Activated naive CD8-positive, alpha-beta T cell treated with anti-CD3 and anti-CD28 coated beads, Interleukin-2, amount 10 ng/mL, durations not matched to agents 7 days and 5 days (primary cell): ENCODE measurements at regions of chr7 and their contacts with region 1.

Region 1: DNA sequence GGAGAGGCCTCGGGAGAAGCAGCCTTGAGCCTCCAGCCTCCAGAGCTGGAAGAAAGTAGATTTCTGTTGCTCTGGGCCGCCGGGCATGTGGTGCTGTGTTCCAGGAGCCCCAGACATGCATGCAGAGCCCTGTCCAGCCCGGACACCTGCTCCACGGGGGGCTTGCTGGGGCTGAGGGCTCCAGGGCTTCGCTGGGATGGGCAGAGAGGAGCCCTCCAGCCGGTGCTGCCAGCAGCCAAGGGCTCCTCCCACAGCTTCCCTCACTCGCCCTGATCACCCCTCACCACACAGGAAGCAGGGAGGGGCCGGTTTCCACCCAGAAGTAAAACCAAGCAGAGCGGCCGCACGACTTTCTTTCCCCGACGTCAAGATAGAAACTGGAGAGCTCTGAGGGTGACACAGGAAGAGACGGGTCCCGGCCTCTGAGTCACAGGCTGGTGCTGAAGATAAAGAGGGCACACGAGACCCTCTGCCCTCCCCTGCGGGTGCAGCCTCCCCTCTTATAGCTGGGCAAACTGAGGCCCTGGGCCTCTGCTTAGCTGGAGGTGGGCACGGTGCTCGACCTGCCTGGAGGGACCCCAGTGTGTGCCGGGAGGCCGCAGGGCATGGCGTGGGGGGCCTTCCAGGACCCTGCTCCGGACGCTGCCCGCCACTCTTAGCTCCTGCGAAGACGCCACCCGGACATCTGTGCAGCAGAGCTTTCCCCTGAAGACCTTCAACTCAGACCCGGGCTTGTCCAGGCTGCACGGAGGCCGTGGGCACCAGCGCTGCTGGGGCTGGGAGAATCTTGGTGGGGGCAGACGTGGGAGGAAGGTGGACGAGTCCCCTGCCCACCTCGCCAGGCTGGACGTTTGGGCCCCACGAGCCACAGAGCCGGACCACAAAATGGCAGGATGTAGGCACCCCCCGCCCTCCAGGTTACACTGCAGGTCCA is 31.1 kb downstream of the ADAP1 start:
- DNase-seq: peak; percentile 86
- ATAC-seq: peak; percentile 76
- H3K4me3 Mint-ChIP-seq: peak overlapping the region; percentile 90
- H3K27ac Mint-ChIP-seq: peak overlapping the region; percentile 96
- H3K4me1 Mint-ChIP-seq: peaks cover 8% of the 10 kb centered on the region
- H3K27me3 Mint-ChIP-seq: no peaks in the 10 kb centered on the region

Region 2: DNA sequence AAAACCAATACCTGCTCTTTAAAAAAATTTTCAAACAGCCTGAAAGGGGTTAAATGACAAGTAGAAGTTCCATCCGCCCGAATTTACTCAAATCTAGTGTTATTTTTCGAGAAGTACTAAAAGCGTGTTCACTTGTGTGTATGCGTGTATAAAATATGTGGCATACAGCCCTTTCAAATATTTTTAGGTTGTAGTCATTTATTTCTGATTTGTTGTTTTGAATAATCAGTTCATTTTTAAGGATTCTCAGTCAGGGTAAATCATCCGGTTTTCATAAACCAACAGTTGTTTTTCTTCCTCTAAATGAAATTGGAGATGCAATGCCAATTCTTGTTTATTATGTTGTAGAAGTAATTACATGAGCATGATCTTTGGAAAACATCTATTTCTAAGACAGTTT is 98.0 kb before region 1 on chr7:
- POLR2A ChIA-PET with region 1: no interaction called
- DNase-seq: no peak
- ATAC-seq: no peak
- H3K4me3 Mint-ChIP-seq: no peak overlapping the region
- H3K27ac Mint-ChIP-seq: no peak overlapping the region
- H3K4me1 Mint-ChIP-seq: peaks cover 6% of the 10 kb centered on the region
- H3K27me3 Mint-ChIP-seq: no peaks in the 10 kb centered on the region

Region 3: DNA sequence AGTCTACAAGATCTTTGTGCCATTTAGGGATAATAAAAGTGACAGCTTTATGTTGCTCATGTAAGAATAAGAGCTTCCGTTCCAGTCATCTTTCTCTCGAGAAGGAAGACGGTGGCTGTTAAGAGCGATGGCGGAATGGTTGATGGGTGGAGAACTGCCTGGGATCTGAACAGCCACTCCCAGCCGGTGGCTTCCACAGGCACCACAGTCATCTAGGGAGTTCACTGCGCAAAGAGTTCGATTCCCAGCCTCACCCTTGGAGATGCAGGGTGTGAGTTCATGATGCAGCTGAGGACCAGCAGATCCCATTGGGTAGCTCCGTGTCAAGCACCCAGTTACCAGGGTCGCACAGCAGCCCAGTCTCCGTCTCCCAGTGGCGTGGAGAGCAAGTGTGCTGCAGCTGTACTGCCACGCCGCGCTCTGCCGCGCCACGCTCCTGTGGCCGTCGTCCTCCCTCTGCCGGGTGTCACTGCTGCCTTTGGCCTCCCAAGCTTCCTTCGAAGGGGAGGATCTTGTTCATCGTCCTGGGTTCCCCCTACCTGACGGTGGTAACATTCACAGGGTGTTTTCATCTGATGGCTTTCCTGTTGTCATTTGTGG is 83.3 kb before region 1 on chr7:
- POLR2A ChIA-PET with region 1: no interaction called
- DNase-seq: no peak
- ATAC-seq: no peak
- H3K4me3 Mint-ChIP-seq: no peak overlapping the region
- H3K27ac Mint-ChIP-seq: no peak overlapping the region
- H3K4me1 Mint-ChIP-seq: peaks cover 8% of the 10 kb centered on the region
- H3K27me3 Mint-ChIP-seq: no peaks in the 10 kb centered on the region

Region 4: DNA sequence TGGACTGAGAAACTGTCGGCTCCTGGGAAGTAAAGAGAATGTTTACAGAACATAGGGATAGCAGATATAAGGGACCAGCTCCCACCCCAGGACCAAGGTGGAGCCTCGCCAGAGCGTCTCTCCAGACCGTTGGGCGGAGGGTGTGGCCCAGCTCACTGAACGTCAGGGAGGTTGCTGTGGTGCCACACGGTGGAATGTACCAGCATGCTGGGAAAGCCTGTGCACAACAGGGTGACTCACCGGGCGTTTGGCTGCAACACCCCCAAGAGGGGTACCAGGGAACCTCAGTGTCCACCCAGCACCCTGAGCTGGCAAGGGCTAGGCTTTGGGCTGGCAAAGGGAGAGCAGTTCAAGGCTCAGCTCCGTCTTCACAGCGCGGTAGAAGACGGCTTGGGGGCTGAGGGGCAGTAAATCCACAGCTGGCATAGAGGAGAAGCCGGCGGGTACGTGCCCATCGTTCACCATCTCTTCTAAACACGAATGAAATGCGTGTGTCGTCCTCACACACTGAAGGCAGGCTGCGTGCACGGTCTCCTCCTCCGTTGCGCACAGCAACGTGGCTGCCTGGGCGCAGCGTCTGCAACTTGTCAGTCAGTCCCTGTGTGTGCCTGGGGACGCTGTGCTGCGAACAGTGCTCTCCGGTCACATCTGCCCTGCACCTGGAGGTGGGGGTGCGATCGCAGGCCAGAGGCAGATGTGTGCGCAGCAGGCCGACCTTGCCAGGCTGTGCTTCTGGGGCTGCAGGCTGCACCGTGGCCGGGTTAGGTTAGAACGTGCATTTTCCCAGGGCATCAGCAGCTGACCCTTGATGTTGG is 55.5 kb before region 1 on chr7:
- POLR2A ChIA-PET with region 1: no interaction called
- DNase-seq: no peak
- ATAC-seq: no peak
- H3K4me3 Mint-ChIP-seq: no peak overlapping the region
- H3K27ac Mint-ChIP-seq: no peak overlapping the region
- H3K4me1 Mint-ChIP-seq: peaks cover under 1% of the 10 kb centered on the region
- H3K27me3 Mint-ChIP-seq: no peaks in the 10 kb centered on the region

Region 5: DNA sequence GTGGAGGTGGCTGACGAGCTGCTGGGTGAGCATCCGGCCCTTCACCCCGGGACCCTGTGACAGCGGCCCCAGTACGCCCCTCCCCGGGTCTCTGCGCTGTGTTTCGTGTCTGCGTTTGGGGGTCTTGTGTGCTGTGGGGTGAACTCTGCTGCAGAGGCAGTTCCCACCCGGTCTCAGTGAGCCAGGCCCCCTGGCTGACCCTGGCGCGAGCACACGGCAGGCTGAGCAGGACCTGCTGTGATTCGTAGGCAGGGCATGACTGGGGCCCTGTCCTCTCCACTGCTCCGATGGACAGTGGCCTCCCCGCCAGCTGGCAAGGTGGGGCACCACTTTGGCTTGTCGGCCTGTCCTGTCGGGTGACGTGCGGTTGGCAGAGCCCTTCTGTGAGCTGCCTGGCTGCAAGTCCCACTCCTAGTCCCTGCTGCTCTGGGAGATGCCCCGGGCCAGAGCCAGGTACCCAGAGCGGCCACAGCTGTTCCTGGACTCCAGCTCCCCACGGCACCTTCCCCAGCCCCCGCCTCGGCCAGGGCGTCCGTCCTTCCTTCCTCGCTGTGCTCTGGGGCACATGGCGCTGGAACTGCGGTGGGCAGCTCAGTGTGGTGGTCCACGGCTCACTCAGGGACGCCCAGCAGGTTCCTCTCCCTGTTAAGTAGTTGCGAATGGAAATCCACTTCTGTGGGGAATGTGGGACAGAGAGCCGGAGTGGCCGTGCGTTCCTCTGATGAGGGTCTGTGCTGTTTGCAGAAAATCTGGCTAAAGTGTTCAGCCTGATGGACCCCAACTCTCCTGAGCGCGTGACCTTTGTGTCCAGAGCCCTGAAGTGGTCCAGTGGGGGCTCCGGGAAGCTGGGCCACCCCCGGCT is 36.5 kb before region 1 on chr7:
- POLR2A ChIA-PET with region 1: no interaction called
- DNase-seq: no peak
- ATAC-seq: no peak
- H3K4me3 Mint-ChIP-seq: no peak overlapping the region
- H3K27ac Mint-ChIP-seq: no peak overlapping the region
- H3K4me1 Mint-ChIP-seq: no peaks in the 10 kb centered on the region
- H3K27me3 Mint-ChIP-seq: no peaks in the 10 kb centered on the region

Region 6: DNA sequence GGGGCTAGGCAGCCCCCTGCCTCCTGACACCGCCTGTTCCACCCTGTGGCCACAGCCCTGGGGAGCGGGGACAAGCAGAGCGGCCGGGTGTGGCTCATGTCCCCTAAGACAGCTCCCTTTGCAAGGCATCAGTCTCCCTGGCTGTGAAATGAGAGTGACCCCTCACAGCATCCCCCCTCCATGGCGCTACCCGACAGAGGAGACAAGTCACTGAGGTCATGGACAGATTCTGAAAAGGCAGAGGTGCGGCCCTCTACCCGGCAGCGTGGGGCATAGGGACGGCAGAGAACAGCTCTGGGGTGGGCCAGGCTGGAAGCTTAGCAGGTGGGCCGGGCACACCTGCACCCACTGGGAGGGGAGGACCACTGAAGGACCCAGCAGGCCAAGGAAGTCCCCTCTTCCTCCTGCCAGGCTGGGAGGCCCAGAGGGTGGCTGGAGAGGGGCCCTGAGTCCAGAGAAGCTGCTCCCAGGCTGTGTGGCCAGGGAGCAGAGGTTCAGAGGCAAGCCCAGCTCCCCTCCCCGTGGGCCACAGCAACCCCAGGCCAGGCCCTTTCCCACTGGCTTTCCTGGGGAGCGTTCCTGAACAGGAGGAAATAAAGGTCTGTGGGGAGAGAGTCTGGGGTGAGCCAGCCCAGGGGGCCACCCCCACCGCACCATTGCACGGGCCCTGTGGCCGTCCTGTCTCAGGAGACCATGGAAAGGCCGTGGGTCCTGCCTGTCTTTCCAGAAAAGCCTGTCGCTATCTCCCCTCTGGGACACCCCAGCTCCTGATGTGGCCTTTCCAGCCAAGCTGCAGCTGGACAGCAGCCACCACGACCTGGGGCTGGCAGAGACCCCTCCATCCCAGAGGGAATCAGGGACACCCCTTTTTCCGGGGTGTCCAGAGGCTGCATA is 29.4 kb after region 1 on chr7:
- POLR2A ChIA-PET with region 1: interaction called, 10 read pairs
- DNase-seq: no peak
- ATAC-seq: no peak
- H3K4me3 Mint-ChIP-seq: peak overlapping the region; percentile 39
- H3K27ac Mint-ChIP-seq: no peak overlapping the region
- H3K4me1 Mint-ChIP-seq: peaks cover 5% of the 10 kb centered on the region
- H3K27me3 Mint-ChIP-seq: no peaks in the 10 kb centered on the region

Region 7: GRCh38 chr7:974820-975681 is 51.7 kb after region 1 on chr7 and contains the start of gene COX19:
- POLR2A ChIA-PET with region 1: interaction called, 27 read pairs
- DNase-seq: peak; percentile 93
- ATAC-seq: peak; percentile 94
- H3K4me3 Mint-ChIP-seq: peak within 1 kb of the TSS; percentile 93
- H3K27ac Mint-ChIP-seq: peak within 1 kb of the TSS; percentile 89
- H3K4me1 Mint-ChIP-seq: peaks cover 16% of the 10 kb centered on the region
- H3K27me3 Mint-ChIP-seq: no peaks in the 10 kb centered on the region
- total RNA-seq, gene COX19: 26.2 to 29.3 TPM